ENCODE measurements at regions of chr12 and their contacts with region 1.

Region 1: GRCh38 chr12:31531893-31532292 is 59.0 kb downstream of the DENND5B start:
- DNase-seq: no peak
- H3K4me3 ChIP-seq: no peak overlapping the region
- H3K27ac ChIP-seq: no peak overlapping the region
- H3K4me1 ChIP-seq: no peaks in the 10 kb centered on the region
- H3K27me3 ChIP-seq: no peaks in the 10 kb centered on the region
- CTCF ChIP-seq: no peak

Region 2: GRCh38 chr12:31466768-31467167 is 65.1 kb before region 1 on chr12:
- CTCF ChIA-PET with region 1: no interaction called
- dilution Hi-C with region 1: loop called (anchors 5 kb)
- in situ Hi-C with region 1: no loop called
- intact Hi-C with region 1: no loop called
- DNase-seq: no peak
- H3K4me3 ChIP-seq: no peak overlapping the region
- H3K27ac ChIP-seq: no peak overlapping the region
- H3K4me1 ChIP-seq: no peaks in the 10 kb centered on the region
- H3K27me3 ChIP-seq: no peaks in the 10 kb centered on the region
- CTCF ChIP-seq: no peak

Measured in mammary epithelial cell (primary cell).